ENCODE measurements at regions of chr16 and their contacts with region 1.

Region 1: DNA sequence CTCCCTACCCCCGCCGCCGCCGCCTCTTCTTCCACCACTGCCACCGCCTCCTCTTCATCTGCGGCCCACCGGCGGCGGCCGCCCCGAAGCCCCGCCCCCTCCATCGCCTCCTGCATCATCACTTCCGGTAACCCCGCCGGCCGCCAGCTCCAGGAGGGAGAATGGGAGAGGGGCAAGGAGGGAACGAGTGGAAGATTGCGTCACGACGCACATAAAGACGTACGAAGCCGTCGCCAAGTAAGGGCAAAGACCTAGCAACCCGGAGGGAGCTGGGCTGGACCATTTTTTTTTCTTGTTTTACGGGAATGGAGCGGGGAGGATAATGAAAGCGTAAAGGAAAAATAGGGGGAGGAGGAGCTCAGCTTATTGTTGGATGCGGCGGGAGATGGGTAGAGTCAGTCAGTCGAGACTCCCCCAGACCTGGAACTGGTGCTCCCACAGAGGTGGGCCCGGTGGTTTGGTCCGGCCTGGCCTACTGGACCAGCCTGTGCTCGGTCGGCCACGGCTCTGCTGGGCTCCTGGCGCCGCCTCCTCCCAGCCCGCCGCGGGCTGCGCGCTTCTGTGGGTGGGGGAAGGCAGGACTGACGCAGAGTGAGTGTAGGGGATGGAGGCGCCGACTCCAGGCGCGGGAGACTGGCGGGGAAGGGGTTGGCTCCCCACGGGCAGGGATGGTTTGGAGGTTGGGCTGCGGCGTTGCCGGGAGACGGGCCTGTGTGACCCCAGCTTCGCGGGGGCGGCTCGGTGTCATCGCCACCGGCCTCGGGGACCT is at the starts of genes DCUN1D3 and LYRM1:
- DNase-seq: peak; percentile 93
- ATAC-seq: peak; percentile 81
- H3K4me3 Mint-ChIP-seq: peak within 1 kb of the TSS; percentile 83
- H3K27ac Mint-ChIP-seq: peak within 1 kb of the TSS; percentile 95
- H3K4me1 Mint-ChIP-seq: peaks cover 72% of the 10 kb centered on the region
- H3K27me3 Mint-ChIP-seq: no peaks in the 10 kb centered on the region
- total RNA-seq, gene DCUN1D3: 10.0 to 10.7 TPM
- total RNA-seq, gene LYRM1: 27.5 to 28.0 TPM

Region 2: GRCh38 chr16:20874088-20874581 is 26.3 kb before region 1 on chr16:
- CTCF ChIA-PET with region 1: interaction called, 38 read pairs
- POLR2A ChIA-PET with region 1: interaction called, 46 read pairs
- DNase-seq: no peak
- ATAC-seq: no peak
- H3K4me3 Mint-ChIP-seq: peak overlapping the region; percentile 70
- H3K27ac Mint-ChIP-seq: peak overlapping the region; percentile 97
- H3K4me1 Mint-ChIP-seq: peaks cover 78% of the 10 kb centered on the region
- H3K27me3 Mint-ChIP-seq: no peaks in the 10 kb centered on the region

Region 3: GRCh38 chr16:20887207-20887606 is 13.3 kb before region 1 on chr16:
- CTCF ChIA-PET with region 1: no interaction called
- POLR2A ChIA-PET with region 1: no interaction called
- DNase-seq: no peak
- ATAC-seq: no peak
- H3K4me3 Mint-ChIP-seq: no peak overlapping the region
- H3K27ac Mint-ChIP-seq: no peak overlapping the region
- H3K4me1 Mint-ChIP-seq: peaks cover 26% of the 10 kb centered on the region
- H3K27me3 Mint-ChIP-seq: no peaks in the 10 kb centered on the region

Region 4: GRCh38 chr16:21101631-21102420 is 201.3 kb after region 1 on chr16:
- CTCF ChIA-PET with region 1: no interaction called
- POLR2A ChIA-PET with region 1: no interaction called
- DNase-seq: peak; percentile 23
- ATAC-seq: no peak
- H3K4me3 Mint-ChIP-seq: no peak overlapping the region
- H3K27ac Mint-ChIP-seq: no peak overlapping the region
- H3K4me1 Mint-ChIP-seq: peaks cover 1% of the 10 kb centered on the region
- H3K27me3 Mint-ChIP-seq: peaks cover 30% of the 10 kb centered on the region

Measured in activated CD8-positive, alpha-beta T cell treated with anti-CD3 and anti-CD28 coated beads, Interleukin-2, amount 10 ng/mL, durations not matched to agents 7 days and 5 days (primary cell).